Activated naive CD4-positive, alpha-beta T cell treated with anti-CD3 and anti-CD28 coated beads, Interleukin-2, amount 10 ng/mL, durations not matched to agents 7 days and 5 days (primary cell): ENCODE measurements at regions of chr15 and their contacts with region 1.

Region 1: DNA sequence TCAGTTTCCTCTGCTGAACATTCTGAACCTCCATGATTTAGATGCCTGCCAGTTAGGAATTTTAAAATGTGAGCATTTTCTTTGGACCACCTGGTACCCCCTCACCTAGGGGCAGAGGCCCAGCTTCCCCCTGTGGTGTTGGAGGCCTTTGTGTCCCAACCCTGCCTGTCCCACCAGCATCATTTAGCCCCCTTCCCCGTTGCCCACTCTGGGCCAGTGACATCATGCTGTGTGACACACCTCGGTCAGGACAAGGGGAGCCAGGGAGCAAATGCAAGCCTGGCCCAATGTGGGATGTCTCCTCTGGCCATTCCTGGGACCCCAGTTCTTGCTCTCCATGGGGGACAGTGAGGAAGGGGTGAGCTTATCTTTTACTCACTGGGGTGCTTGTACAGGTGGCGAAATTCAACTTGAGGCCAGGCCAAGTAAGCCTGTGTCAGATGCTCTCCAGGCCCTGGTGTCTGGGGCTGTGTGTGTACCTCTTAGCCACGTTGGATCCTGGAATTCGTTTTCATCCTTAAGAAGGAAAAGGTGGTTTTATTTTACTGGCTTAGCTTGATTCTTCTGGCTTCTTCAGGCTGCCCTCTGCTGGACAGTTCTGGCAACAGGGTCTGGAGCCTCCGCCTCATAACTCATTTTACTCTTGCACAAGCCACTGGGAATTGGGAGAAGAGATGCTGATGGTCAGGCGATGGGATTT is 49.7 kb upstream of the MYZAP start:
- DNase-seq: peak; percentile 56
- H3K4me3 Mint-ChIP-seq: no peak overlapping the region
- H3K27ac Mint-ChIP-seq: no peak overlapping the region
- H3K4me1 Mint-ChIP-seq: no peaks in the 10 kb centered on the region
- H3K27me3 Mint-ChIP-seq: peaks cover 27% of the 10 kb centered on the region

Region 2: DNA sequence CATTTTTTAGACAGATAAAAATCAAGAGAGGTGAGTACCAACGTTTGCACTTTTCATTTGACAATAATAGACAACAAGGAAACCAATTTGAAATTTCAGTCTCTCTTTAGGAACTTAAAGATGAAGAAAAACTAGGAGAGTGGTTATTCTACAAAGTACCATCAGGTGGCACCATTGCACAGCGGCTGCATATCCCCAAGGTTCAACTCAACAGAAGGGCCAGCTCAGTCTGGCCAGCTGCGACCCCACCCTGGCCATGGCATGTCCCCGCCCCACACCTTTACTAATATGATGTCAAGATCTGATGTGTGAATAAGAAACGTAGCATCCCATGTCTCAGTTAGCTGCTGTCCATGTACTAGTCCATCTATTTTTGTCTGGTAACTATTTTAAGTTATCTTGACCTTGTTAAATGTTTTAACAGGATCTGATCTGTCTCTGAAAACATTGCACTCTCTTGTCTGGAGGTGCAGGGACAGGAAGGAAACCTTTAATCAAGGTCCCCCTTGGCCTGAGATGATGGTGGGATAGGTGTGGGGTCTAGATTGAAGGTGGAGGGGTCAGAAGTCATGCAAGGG is 201.2 kb before region 1 on chr15:
- CTCF ChIA-PET with region 1: interaction called, 27 read pairs
- DNase-seq: peak; percentile 51
- H3K4me3 Mint-ChIP-seq: no peak overlapping the region
- H3K27ac Mint-ChIP-seq: no peak overlapping the region
- H3K4me1 Mint-ChIP-seq: no peaks in the 10 kb centered on the region
- H3K27me3 Mint-ChIP-seq: peaks cover 23% of the 10 kb centered on the region

Region 3: GRCh38 chr15:57527382-57528091 is 14.4 kb before region 1 on chr15:
- CTCF ChIA-PET with region 1: interaction called, 11 read pairs
- DNase-seq: peak; percentile 24
- H3K4me3 Mint-ChIP-seq: no peak overlapping the region
- H3K27ac Mint-ChIP-seq: no peak overlapping the region
- H3K4me1 Mint-ChIP-seq: no peaks in the 10 kb centered on the region
- H3K27me3 Mint-ChIP-seq: peaks cover 35% of the 10 kb centered on the region

Region 4: DNA sequence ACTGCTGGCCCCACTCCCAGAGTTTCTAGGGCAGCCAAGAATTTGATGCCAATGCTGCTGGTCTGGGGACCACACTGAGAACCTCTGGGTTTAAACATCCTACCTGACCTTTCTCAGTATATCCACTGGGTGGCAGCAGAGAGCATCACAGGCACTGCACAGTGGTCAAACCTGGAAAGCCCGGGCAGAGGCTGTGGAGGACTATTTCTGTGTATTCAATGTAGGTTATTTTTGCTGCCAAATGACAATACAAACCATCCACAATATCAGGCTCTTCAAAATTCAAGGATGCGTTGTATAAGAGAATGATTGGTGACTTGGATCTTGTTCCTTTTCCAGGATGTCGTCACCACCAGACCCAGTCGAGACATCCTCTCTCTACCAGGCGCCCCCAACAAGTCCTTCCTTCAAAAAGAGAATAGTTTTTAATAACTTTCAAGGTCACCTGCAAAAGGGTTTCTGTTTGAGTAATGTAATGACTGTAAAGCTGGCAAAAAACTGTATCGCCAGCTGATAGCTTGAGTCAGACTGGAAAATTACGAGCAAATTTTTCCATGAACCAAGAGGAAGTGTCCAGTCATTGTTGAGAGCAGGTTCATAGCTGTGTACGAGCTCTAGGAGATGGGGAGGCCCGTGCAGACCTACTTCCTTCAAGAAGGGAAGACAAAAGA is 19.2 kb after region 1 on chr15:
- CTCF ChIA-PET with region 1: interaction called, 12 read pairs
- DNase-seq: peak; percentile 74
- H3K4me3 Mint-ChIP-seq: no peak overlapping the region
- H3K27ac Mint-ChIP-seq: no peak overlapping the region
- H3K4me1 Mint-ChIP-seq: peaks cover 46% of the 10 kb centered on the region
- H3K27me3 Mint-ChIP-seq: peaks cover 7% of the 10 kb centered on the region